CD8-positive, alpha-beta memory T cell (primary cell): ENCODE measurements at regions of chr3 and their contacts with region 1.

Region 1: GRCh38 chr3:67113802-67114407 is 115.8 kb downstream of the KBTBD8 start:
- DNase-seq: peak; percentile 44 to 77 (median 52)
- H3K4me3 ChIP-seq: no peak overlapping the region
- H3K4me3 Mint-ChIP-seq: no peak overlapping the region
- H3K27ac ChIP-seq: no peak overlapping the region
- H3K27ac Mint-ChIP-seq: no peak overlapping the region
- H3K4me1 ChIP-seq: no peaks in the 10 kb centered on the region
- H3K4me1 Mint-ChIP-seq: peaks cover 0 to 1% (median 0%) of the 10 kb centered on the region in 3 donors
- H3K27me3 ChIP-seq: no peaks in the 10 kb centered on the region
- H3K27me3 Mint-ChIP-seq: peaks cover 12 to 37% of the 10 kb centered on the region in 2 donors

Region 2: GRCh38 chr3:67127254-67127653 is 13.3 kb after region 1 on chr3:
- CTCF ChIA-PET with region 1: interaction called, 10 read pairs
- POLR2A ChIA-PET with region 1: no interaction called
- DNase-seq: no peak
- H3K4me3 ChIP-seq: no peak overlapping the region
- H3K4me3 Mint-ChIP-seq: no peak overlapping the region
- H3K27ac ChIP-seq: no peak overlapping the region
- H3K27ac Mint-ChIP-seq: no peak overlapping the region
- H3K4me1 ChIP-seq: no peaks in the 10 kb centered on the region
- H3K4me1 Mint-ChIP-seq: no peaks in the 10 kb centered on the region
- H3K27me3 ChIP-seq: no peaks in the 10 kb centered on the region
- H3K27me3 Mint-ChIP-seq: peaks cover 8 to 11% of the 10 kb centered on the region in 2 donors

Region 3: DNA sequence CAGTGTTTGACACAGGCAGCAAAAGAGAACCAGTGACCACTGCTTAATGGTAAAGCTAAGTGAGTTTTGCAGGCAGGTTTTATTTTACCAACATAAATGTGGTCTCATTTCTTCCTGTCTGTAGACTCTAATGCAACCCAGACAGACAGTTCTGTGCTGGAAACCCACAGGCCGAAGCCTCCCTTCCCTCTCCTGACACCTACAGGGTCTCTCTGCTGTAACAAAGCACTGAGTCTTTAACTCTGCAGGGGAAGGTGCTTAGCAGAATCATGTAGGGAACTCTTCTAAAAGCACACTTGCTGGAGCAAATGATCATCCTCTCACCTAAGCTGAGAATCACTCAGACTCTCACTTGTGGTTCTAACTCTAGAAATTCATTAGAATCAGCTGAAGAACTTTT is 84.5 kb after region 1 on chr3:
- CTCF ChIA-PET with region 1: no interaction called
- POLR2A ChIA-PET with region 1: no interaction called
- DNase-seq: no peak
- H3K4me3 ChIP-seq: no peak overlapping the region
- H3K4me3 Mint-ChIP-seq: no peak overlapping the region
- H3K27ac ChIP-seq: no peak overlapping the region
- H3K27ac Mint-ChIP-seq: no peak overlapping the region
- H3K4me1 ChIP-seq: no peaks in the 10 kb centered on the region
- H3K4me1 Mint-ChIP-seq: no peaks in the 10 kb centered on the region
- H3K27me3 ChIP-seq: no peaks in the 10 kb centered on the region
- H3K27me3 Mint-ChIP-seq: peaks cover 0 to 1% of the 10 kb centered on the region in 2 donors

Region 4: GRCh38 chr3:67790043-67790442 is 676.1 kb after region 1 on chr3:
- CTCF ChIA-PET with region 1: interaction called, 30 read pairs
- POLR2A ChIA-PET with region 1: no interaction called
- DNase-seq: peak; percentile 28 to 75 (median 46)
- H3K4me3 ChIP-seq: no peak overlapping the region
- H3K4me3 Mint-ChIP-seq: no peak overlapping the region
- H3K27ac ChIP-seq: no peak overlapping the region
- H3K27ac Mint-ChIP-seq: no peak overlapping the region
- H3K4me1 ChIP-seq: peaks cover 5% of the 10 kb centered on the region
- H3K4me1 Mint-ChIP-seq: peaks cover 4 to 7% (median 4%) of the 10 kb centered on the region in 3 donors
- H3K27me3 ChIP-seq: no peaks in the 10 kb centered on the region
- H3K27me3 Mint-ChIP-seq: peaks cover 2 to 4% of the 10 kb centered on the region in 2 donors

Region 5: DNA sequence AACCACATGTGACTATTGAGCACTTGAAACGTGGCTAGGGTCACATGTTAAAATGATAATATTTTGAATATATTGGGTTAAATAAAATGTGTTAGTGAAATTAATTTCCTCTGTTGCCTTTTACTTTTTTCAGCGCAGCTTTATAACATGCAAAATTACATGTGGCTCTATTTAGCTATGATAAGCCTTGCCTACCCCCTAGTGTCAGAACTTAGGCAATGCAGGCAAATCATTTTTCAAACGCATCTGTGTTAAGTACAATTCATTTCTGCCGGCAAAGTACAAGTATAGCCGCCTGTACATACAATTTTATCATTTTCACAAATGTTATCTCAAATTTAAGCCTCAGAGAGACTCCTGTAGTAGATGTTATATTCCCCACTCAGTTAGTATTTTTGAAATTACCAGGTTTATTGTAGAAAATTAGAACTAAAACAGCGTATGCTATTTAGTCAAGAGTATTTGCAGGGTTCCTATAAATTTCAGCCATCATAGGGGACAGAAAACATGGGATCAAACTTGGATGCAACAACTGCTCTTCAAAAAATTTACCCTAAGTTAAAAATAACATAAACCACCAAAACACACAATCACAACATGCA is 1762.3 kb after region 1 on chr3:
- CTCF ChIA-PET with region 1: interaction called, 37 read pairs
- POLR2A ChIA-PET with region 1: no interaction called
- DNase-seq: peak in 3 of 5 donors; percentile 28 to 49 (median 42)
- H3K4me3 ChIP-seq: no peak overlapping the region
- H3K4me3 Mint-ChIP-seq: no peak overlapping the region
- H3K27ac ChIP-seq: no peak overlapping the region
- H3K27ac Mint-ChIP-seq: no peak overlapping the region
- H3K4me1 ChIP-seq: no peaks in the 10 kb centered on the region
- H3K4me1 Mint-ChIP-seq: no peaks in the 10 kb centered on the region
- H3K27me3 ChIP-seq: no peaks in the 10 kb centered on the region
- H3K27me3 Mint-ChIP-seq: peaks cover 7 to 35% of the 10 kb centered on the region in 2 donors

Region 6: GRCh38 chr3:68893600-68894239 is 1779.8 kb after region 1 on chr3:
- CTCF ChIA-PET with region 1: interaction called, 11 read pairs
- POLR2A ChIA-PET with region 1: no interaction called
- DNase-seq: peak in 1 of 5 donors; percentile 18
- H3K4me3 ChIP-seq: no peak overlapping the region
- H3K4me3 Mint-ChIP-seq: no peak overlapping the region
- H3K27ac ChIP-seq: no peak overlapping the region
- H3K27ac Mint-ChIP-seq: no peak overlapping the region
- H3K4me1 ChIP-seq: no peaks in the 10 kb centered on the region
- H3K4me1 Mint-ChIP-seq: no peaks in the 10 kb centered on the region
- H3K27me3 ChIP-seq: no peaks in the 10 kb centered on the region
- H3K27me3 Mint-ChIP-seq: peaks cover 0 to 18% of the 10 kb centered on the region in 2 donors